ENCODE measurements at regions of chr21 and their contacts with region 1.

Region 1: DNA sequence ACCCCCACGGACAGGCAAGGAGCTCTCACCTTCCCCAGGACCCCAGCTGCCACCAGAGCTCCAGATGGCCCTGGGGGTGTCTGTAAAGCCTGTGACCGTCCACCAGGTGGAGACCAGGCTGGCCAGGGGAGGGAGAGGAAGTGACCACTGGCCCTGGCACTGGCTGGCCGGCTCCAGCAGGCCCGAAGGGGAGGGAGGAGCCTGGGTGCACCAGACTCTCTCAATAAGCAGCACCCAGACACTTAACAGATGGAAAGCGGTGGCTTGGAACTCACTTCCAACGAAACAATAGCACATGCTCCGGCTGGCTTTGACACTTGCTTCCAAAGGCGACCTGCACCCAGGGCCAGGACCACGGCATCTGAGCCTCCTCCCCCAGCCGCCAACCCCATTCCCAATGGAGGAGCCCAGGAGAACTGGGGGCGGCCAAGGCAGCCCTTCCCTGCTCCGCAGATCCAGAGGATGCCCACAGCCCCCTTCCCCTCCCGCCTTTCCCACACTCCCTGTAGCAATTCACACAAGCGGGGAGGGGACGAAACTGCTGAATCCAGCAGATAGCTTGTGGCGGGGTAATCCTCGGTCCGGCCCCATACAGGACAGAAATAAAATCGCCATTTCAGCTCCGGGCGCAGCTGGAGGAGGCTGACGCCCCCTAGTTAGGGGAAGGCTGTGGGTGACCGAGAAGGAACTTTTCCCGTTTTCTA is 742 bp upstream of the PDE9A start:
- DNase-seq: peak; percentile 66 to 79 (median 70)
- ATAC-seq: peak; percentile 76 to 87 (median 82)
- H3K4me3 ChIP-seq: peak overlapping the region; percentile 28 to 87 (median 52)
- H3K27ac ChIP-seq: peak overlapping the region in 9 of 12 donors; percentile 20 to 87 (median 57)
- H3K4me1 ChIP-seq: peaks cover 0 to 38% (median 19%) of the 10 kb centered on the region in 12 donors
- H3K27me3 ChIP-seq: peaks cover 0 to 43% (median 17%) of the 10 kb centered on the region in 9 donors
- CTCF ChIP-seq: peak; percentile 37 to 64 (median 54)
- POLR2A ChIP-seq: no peak

Region 2: DNA sequence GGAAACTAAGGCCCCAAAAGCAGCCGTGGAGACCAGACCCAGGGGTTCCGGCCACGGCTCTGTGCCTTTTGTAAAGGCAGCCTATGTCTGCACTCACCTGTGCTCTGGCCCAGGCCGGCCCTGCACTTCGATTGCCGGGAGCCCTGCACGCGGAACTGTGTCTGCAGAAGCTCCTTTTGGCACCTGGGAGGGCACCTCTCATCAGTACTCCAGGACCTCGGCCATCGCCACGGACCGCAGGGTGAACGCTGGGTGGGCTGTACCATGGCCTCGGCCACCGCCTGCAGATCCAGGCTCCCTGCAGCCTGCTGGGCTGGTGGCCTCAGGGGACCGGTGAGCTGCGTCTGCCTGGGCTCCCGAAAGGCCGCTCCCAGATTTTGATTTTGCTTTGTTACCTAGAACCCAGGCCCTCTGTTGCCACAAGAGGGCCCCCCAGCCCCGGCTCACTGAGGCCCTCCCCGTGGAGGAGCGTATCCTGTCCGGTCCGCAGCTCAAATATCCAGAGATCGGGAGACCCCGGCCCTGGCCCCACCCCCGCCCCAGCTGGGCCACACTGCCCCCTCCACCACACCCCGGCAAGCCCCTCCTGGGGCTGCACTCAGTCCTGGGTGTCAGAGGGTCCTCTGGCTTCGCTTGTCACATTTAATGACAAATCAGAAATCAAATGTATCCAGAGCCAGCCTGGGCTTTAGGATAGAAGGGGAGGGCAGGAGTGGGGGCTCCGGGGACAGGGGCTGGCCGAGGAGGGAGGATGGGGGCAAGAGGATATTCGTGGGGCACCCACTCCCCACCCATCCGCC is 59.5 kb before region 1 on chr21:
- intact Hi-C with region 1: loop called in 4 of 10 experiments (anchors 5 to 10 kb)
- DNase-seq: peak; percentile 63 to 83 (median 67)
- ATAC-seq: peak; percentile 61 to 93 (median 92)
- H3K4me3 ChIP-seq: no peak overlapping the region
- H3K27ac ChIP-seq: no peak overlapping the region
- H3K4me1 ChIP-seq: peaks cover 0 to 7% (median 4%) of the 10 kb centered on the region in 12 donors
- H3K27me3 ChIP-seq: peaks cover 0 to 21% (median 0%) of the 10 kb centered on the region in 9 donors
- CTCF ChIP-seq: peak; percentile 72 to 89 (median 82)
- POLR2A ChIP-seq: no peak

Region 3: DNA sequence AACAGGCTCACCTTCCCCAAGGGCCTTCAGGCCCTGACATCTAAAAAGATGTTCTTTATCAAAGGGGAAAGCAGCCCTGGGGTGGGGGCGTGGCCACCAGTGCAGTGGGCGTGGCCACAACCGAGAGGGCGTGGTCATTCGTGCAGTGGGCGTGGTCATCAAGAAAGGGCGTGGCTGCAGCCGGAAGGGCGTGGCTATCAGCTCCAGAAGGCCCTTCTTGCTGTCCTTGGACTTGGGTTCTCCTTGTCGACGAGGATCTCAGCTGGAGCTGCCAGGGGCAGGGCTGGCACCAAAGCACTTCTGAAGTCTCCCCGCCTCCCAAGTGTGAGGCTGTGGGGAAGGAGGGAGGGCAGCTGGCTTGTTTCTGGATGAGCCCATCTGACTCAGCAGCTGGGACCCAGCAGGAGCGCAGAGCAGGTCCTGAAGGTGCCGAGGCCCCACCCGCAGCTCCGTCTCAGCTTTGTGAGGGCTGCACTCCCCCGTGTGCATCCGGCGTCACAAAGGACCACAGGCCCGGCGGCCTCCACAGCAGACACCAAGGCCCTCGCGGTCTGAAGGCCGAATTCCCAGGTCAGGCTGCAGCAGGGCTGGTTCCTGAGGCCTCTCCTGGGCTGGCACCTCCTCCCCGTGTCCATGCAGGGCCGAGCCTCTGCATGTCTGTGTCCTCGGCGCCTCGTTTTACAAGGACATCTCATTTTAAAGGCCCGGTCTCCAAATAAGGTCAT is 13.5 kb after region 1 on chr21:
- intact Hi-C with region 1: no loop called
- DNase-seq: no peak
- ATAC-seq: no peak
- H3K4me3 ChIP-seq: no peak overlapping the region
- H3K27ac ChIP-seq: peak overlapping the region in 1 of 12 donors; percentile 76
- H3K4me1 ChIP-seq: peaks cover 0 to 29% (median 3%) of the 10 kb centered on the region in 12 donors
- H3K27me3 ChIP-seq: no peaks in the 10 kb centered on the region
- CTCF ChIP-seq: no peak
- POLR2A ChIP-seq: no peak

Region 4: DNA sequence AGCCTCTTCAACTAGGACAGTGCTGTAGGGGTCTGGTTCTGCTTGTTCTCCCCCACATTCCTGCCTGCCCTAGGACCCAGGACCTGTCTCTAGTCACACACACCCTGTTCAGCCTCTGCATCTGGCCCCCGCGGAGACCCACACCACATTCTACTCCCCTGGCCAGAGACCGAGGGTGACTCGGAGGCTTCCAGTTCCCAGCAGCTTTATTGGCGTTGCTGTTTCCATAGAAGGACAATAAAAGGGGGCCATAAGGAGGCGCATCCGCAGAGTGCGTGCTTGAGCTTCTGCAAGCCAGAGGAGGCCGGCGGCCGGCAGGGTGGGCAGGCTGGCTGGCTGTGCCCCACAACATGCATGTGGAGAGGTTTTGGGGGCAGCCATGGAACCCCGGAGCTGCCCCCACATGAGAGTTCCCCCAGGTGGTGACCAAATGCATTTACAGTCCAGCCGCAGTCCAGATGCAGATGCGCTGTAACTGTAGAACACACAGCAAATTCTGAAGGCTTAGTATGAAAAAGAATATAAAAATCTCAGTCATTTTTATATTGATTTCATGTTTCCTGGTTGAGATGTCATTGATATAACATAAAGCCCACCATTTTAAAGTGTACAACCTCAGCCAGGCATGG is 53.2 kb after region 1 on chr21:
- intact Hi-C with region 1: loop called in 1 of 10 experiments (anchors 10 kb)
- DNase-seq: peak in 1 of 5 donors; percentile 5
- ATAC-seq: no peak
- H3K4me3 ChIP-seq: no peak overlapping the region
- H3K27ac ChIP-seq: peak overlapping the region in 1 of 12 donors; percentile 45
- H3K4me1 ChIP-seq: no peaks in the 10 kb centered on the region
- H3K27me3 ChIP-seq: peaks cover 0 to 8% (median 0%) of the 10 kb centered on the region in 9 donors
- CTCF ChIP-seq: no peak
- POLR2A ChIP-seq: no peak

Region 5: GRCh38 chr21:42737951-42738590 is 85.4 kb after region 1 on chr21:
- intact Hi-C with region 1: loop called in 2 of 10 experiments (anchors 5 to 10 kb)
- DNase-seq: peak; percentile 53 to 68 (median 62)
- ATAC-seq: peak; percentile 78 to 93 (median 83)
- H3K4me3 ChIP-seq: peak overlapping the region in 2 of 12 donors; percentile 6 to 10
- H3K27ac ChIP-seq: peak overlapping the region; percentile 55 to 88 (median 76)
- H3K4me1 ChIP-seq: peaks cover 0 to 45% (median 16%) of the 10 kb centered on the region in 12 donors
- H3K27me3 ChIP-seq: no peaks in the 10 kb centered on the region
- CTCF ChIP-seq: no peak
- POLR2A ChIP-seq: no peak

Region 6: DNA sequence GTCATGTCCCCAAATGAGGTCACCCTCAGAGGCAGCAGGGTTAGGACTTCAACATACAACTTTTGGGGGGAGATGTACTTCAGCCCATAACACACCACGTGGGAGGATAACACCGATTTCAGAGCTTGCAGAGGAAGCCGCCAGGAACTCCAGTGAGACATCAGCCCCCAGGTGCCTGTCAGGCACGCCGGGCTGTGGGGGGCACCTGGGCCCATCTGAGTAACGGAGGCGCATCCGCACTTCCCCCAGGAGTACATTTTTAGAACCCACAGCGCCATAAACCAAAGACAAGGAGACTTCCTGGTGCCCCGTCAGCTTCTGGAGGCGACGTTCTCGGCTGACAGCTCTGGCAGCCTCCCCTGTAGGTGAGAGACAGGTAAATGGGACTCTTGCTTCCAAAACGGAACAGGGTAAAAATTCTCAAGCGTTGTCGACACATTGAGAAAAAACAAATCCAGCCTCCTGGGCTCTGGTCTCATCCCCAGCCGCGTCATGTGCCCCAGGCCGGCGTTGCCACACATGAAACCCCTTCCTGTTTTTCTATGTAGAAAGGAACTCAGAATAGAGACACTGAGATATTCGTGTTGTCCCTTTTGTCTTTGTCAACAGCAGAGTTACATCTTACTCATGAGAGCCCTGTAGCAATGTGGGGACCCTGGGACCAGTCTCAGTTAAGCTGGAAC is 94.1 kb after region 1 on chr21:
- intact Hi-C with region 1: loop called in 1 of 10 experiments (anchors 10 kb)
- DNase-seq: peak in 4 of 5 donors; percentile 40 to 81 (median 58)
- ATAC-seq: peak in 2 of 4 donors; percentile 47 to 56
- H3K4me3 ChIP-seq: peak overlapping the region in 1 of 12 donors; percentile 35
- H3K27ac ChIP-seq: peak overlapping the region in 8 of 12 donors; percentile 3 to 90 (median 49)
- H3K4me1 ChIP-seq: peaks cover 0 to 32% (median 8%) of the 10 kb centered on the region in 12 donors
- H3K27me3 ChIP-seq: no peaks in the 10 kb centered on the region
- CTCF ChIP-seq: no peak
- POLR2A ChIP-seq: no peak

Region 7: DNA sequence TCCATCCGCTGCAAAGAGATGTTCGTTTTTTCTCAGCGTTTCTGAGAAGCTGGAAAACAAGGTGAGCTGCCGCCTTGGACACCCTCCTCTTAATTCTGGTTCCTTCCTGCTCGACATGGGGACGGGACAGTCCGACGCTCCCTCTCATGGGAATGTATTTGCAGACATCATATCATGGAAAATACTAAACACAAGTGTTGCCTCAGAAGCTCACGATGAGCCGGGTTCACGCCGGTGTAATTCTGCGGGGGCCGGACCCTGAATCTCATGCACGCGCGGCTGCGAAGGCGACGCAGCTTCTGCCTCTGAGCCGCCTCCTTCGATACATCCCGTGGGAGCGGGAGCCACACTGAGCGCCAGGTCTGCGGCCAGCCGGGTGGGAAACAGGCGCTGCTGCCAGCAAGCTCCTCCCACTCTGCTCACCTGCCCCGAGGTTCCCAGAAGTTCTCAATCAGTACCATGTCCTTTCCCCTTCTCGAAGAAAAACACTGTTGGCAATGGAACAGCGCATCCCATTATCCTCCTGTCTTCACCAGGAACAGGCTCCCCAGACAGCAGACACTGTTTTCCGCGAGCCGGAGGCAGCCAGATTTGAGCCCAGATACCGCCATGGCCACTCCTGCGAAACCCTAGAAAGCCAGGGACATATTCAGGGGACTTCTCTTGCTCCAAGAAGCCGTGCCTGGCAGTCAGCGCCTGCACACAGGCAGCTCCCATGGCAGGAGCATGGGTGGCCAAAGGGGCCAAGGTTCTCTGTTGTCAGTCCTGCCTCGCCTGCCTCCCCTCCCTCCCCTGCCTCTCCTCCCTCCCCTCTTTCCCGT is 128.7 kb after region 1 on chr21:
- intact Hi-C with region 1: loop called in 2 of 10 experiments (anchors 10 kb)
- DNase-seq: peak in 2 of 5 donors; percentile 27 to 47
- ATAC-seq: peak in 2 of 4 donors; percentile 14 to 19
- H3K4me3 ChIP-seq: peak overlapping the region in 8 of 12 donors; percentile 22 to 43 (median 35)
- H3K27ac ChIP-seq: peak overlapping the region in 6 of 12 donors; percentile 26 to 93 (median 45)
- H3K4me1 ChIP-seq: peaks cover 0 to 33% (median 24%) of the 10 kb centered on the region in 12 donors
- H3K27me3 ChIP-seq: peaks cover 0 to 29% (median 10%) of the 10 kb centered on the region in 9 donors
- CTCF ChIP-seq: peak in 2 of 12 donors; percentile 11 to 14
- POLR2A ChIP-seq: no peak

Region 8: GRCh38 chr21:42818328-42818749 is 165.7 kb after region 1 on chr21:
- intact Hi-C with region 1: loop called in 9 of 10 experiments (anchors 1 to 5 kb)
- DNase-seq: peak; percentile 37 to 84 (median 60)
- ATAC-seq: peak in 3 of 4 donors; percentile 67 to 87 (median 85)
- H3K4me3 ChIP-seq: no peak overlapping the region
- H3K27ac ChIP-seq: no peak overlapping the region
- H3K4me1 ChIP-seq: no peaks in the 10 kb centered on the region
- H3K27me3 ChIP-seq: peaks cover 0 to 10% (median 0%) of the 10 kb centered on the region in 9 donors
- CTCF ChIP-seq: peak; percentile 76 to 94 (median 87)
- POLR2A ChIP-seq: no peak